Activated CD8-positive, alpha-beta memory T cell treated with anti-CD3 and anti-CD28 coated beads, Interleukin-2, amount 10 ng/mL, durations not matched to agents 7 days and 5 days (primary cell): ENCODE measurements at regions of chr17 and their contacts with region 1.

Region 1: GRCh38 chr17:59440784-59441441 is 109.5 kb downstream of the YPEL2 start:
- DNase-seq: peak; percentile 95
- ATAC-seq: peak; percentile 99
- H3K4me3 Mint-ChIP-seq: peak overlapping the region; percentile 70
- H3K27ac Mint-ChIP-seq: peak overlapping the region; percentile 91
- H3K4me1 Mint-ChIP-seq: peaks cover 59% of the 10 kb centered on the region
- H3K27me3 Mint-ChIP-seq: no peaks in the 10 kb centered on the region

Region 2: GRCh38 chr17:59311130-59311920 is 129.6 kb before region 1 on chr17:
- CTCF ChIA-PET with region 1: interaction called, 199 read pairs
- DNase-seq: peak; percentile 66
- ATAC-seq: peak; percentile 96
- H3K4me3 Mint-ChIP-seq: no peak overlapping the region
- H3K27ac Mint-ChIP-seq: peak overlapping the region; percentile 25
- H3K4me1 Mint-ChIP-seq: peaks cover 8% of the 10 kb centered on the region
- H3K27me3 Mint-ChIP-seq: no peaks in the 10 kb centered on the region

Region 3: GRCh38 chr17:59342681-59343131 is 98.2 kb before region 1 on chr17:
- CTCF ChIA-PET with region 1: interaction called, 10 read pairs
- DNase-seq: peak; percentile 69
- ATAC-seq: peak; percentile 92
- H3K4me3 Mint-ChIP-seq: no peak overlapping the region
- H3K27ac Mint-ChIP-seq: peak overlapping the region; percentile 78
- H3K4me1 Mint-ChIP-seq: peaks cover 46% of the 10 kb centered on the region
- H3K27me3 Mint-ChIP-seq: no peaks in the 10 kb centered on the region

Region 4: GRCh38 chr17:59361916-59362810 is 78.8 kb before region 1 on chr17:
- CTCF ChIA-PET with region 1: interaction called, 16 read pairs
- DNase-seq: peak; percentile 76
- ATAC-seq: peak; percentile 67
- H3K4me3 Mint-ChIP-seq: peak overlapping the region; percentile 58
- H3K27ac Mint-ChIP-seq: peak overlapping the region; percentile 94
- H3K4me1 Mint-ChIP-seq: peaks cover 86% of the 10 kb centered on the region
- H3K27me3 Mint-ChIP-seq: no peaks in the 10 kb centered on the region

Region 5: GRCh38 chr17:59427425-59427921 is 13.4 kb before region 1 on chr17:
- CTCF ChIA-PET with region 1: interaction called, 25 read pairs
- DNase-seq: peak; percentile 57
- ATAC-seq: peak; percentile 65
- H3K4me3 Mint-ChIP-seq: no peak overlapping the region
- H3K27ac Mint-ChIP-seq: no peak overlapping the region
- H3K4me1 Mint-ChIP-seq: peaks cover 43% of the 10 kb centered on the region
- H3K27me3 Mint-ChIP-seq: no peaks in the 10 kb centered on the region